B cell (primary cell): ENCODE measurements at regions of chr10 and their contacts with region 1.

Region 1: GRCh38 chr10:63268798-63269503 is 135.8 kb downstream of the NRBF2 start:
- DNase-seq: peak; percentile 93
- ATAC-seq: peak; percentile 89
- H3K4me3 ChIP-seq: peak overlapping the region; percentile 64 to 100 (median 95)
- H3K4me3 Mint-ChIP-seq: peak overlapping the region; percentile 100
- H3K27ac ChIP-seq: peak overlapping the region; percentile 85 to 94
- H3K27ac Mint-ChIP-seq: peak overlapping the region; percentile 99
- H3K4me1 ChIP-seq: peaks cover 14 to 18% of the 10 kb centered on the region in 2 donors
- H3K4me1 Mint-ChIP-seq: peaks cover 31% of the 10 kb centered on the region
- H3K27me3 ChIP-seq: no peaks in the 10 kb centered on the region
- H3K27me3 Mint-ChIP-seq: no peaks in the 10 kb centered on the region
- CTCF ChIP-seq: peak; percentile 43

Region 2: DNA sequence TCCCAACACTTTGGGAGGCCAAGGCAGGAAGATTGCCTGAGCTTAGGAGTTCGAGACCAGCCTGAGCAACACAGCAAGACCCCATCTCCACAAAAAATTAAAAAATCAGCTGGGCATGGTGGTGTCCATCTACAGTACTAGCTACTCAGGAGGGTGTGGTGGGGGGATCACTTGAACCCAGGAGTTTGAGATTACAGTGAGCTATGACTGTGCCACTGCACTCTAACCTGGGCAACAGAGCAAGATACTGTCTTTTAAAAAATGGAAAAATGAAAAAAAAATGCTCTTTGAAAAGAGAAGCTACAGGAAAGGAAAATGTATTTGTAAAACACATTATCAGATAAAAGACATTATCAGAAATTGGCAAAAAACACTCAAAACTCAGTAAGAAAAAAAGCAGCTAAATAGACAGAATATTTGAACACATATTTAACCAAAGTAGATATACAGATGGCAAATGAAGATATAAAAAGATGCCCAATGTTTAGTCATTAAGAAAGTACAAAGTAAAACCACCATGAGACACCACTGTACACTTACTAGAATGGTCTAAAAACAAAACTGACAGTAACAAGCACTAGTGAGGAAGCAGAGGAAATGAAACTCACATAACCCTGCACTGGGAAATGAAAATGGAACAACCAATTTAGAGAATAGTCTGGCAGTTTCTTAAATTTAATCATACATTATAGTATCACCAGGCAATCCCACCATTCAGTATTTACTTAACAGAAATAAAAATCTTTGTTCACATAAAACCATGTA is 95.3 kb before region 1 on chr10:
- CTCF ChIA-PET with region 1: no interaction called
- POLR2A ChIA-PET with region 1: no interaction called
- intact Hi-C with region 1: loop called (anchors 5 kb)
- DNase-seq: peak; percentile 70
- ATAC-seq: peak; percentile 91
- H3K4me3 ChIP-seq: no peak overlapping the region
- H3K4me3 Mint-ChIP-seq: peak overlapping the region; percentile 4
- H3K27ac ChIP-seq: peak overlapping the region; percentile 21 to 51
- H3K27ac Mint-ChIP-seq: peak overlapping the region; percentile 59
- H3K4me1 ChIP-seq: peaks cover 18 to 22% of the 10 kb centered on the region in 2 donors
- H3K4me1 Mint-ChIP-seq: peaks cover 31% of the 10 kb centered on the region
- H3K27me3 ChIP-seq: no peaks in the 10 kb centered on the region
- H3K27me3 Mint-ChIP-seq: no peaks in the 10 kb centered on the region
- CTCF ChIP-seq: no peak

Region 3: GRCh38 chr10:63256009-63256773 is 12.8 kb before region 1 on chr10:
- CTCF ChIA-PET with region 1: interaction called, 4 read pairs
- POLR2A ChIA-PET with region 1: interaction called, 6 read pairs
- intact Hi-C with region 1: loop called (anchors 1 kb)
- DNase-seq: peak; percentile 47
- ATAC-seq: peak; percentile 42
- H3K4me3 ChIP-seq: peak overlapping the region in 1 of 5 experiments; percentile 32
- H3K4me3 Mint-ChIP-seq: peak overlapping the region; percentile 83
- H3K27ac ChIP-seq: peak overlapping the region; percentile 34 to 73
- H3K27ac Mint-ChIP-seq: peak overlapping the region; percentile 88
- H3K4me1 ChIP-seq: peaks cover 81 to 92% of the 10 kb centered on the region in 2 donors
- H3K4me1 Mint-ChIP-seq: peaks cover 85% of the 10 kb centered on the region
- H3K27me3 ChIP-seq: no peaks in the 10 kb centered on the region
- H3K27me3 Mint-ChIP-seq: no peaks in the 10 kb centered on the region
- CTCF ChIP-seq: no peak

Region 4: GRCh38 chr10:63286754-63287264 is 17.9 kb after region 1 on chr10:
- CTCF ChIA-PET with region 1: no interaction called
- POLR2A ChIA-PET with region 1: no interaction called
- intact Hi-C with region 1: no loop called
- DNase-seq: no peak
- ATAC-seq: no peak
- H3K4me3 ChIP-seq: no peak overlapping the region
- H3K4me3 Mint-ChIP-seq: no peak overlapping the region
- H3K27ac ChIP-seq: no peak overlapping the region
- H3K27ac Mint-ChIP-seq: no peak overlapping the region
- H3K4me1 ChIP-seq: peaks cover 5 to 7% of the 10 kb centered on the region in 2 donors
- H3K4me1 Mint-ChIP-seq: peaks cover 19% of the 10 kb centered on the region
- H3K27me3 ChIP-seq: no peaks in the 10 kb centered on the region
- H3K27me3 Mint-ChIP-seq: no peaks in the 10 kb centered on the region
- CTCF ChIP-seq: no peak

Region 5: GRCh38 chr10:63308628-63309027 is 39.7 kb after region 1 on chr10:
- CTCF ChIA-PET with region 1: no interaction called
- POLR2A ChIA-PET with region 1: no interaction called
- intact Hi-C with region 1: no loop called
- DNase-seq: no peak
- ATAC-seq: no peak
- H3K4me3 ChIP-seq: no peak overlapping the region
- H3K4me3 Mint-ChIP-seq: no peak overlapping the region
- H3K27ac ChIP-seq: no peak overlapping the region
- H3K27ac Mint-ChIP-seq: no peak overlapping the region
- H3K4me1 ChIP-seq: no peaks in the 10 kb centered on the region
- H3K4me1 Mint-ChIP-seq: peaks cover 1% of the 10 kb centered on the region
- H3K27me3 ChIP-seq: no peaks in the 10 kb centered on the region
- H3K27me3 Mint-ChIP-seq: no peaks in the 10 kb centered on the region
- CTCF ChIP-seq: no peak

Region 6: GRCh38 chr10:63465293-63466143 is 196.6 kb after region 1 on chr10 and contains the start of gene JMJD1C:
- CTCF ChIA-PET with region 1: interaction called, 3 read pairs
- POLR2A ChIA-PET with region 1: interaction called, 3 read pairs
- intact Hi-C with region 1: loop called (anchors 5 kb)
- DNase-seq: peak; percentile 84
- ATAC-seq: peak; percentile 72
- H3K4me3 ChIP-seq: peak within 1 kb of the TSS; percentile 66 to 97 (median 92)
- H3K4me3 Mint-ChIP-seq: peak within 1 kb of the TSS; percentile 98
- H3K27ac ChIP-seq: peak within 1 kb of the TSS; percentile 60 to 75
- H3K27ac Mint-ChIP-seq: peak within 1 kb of the TSS; percentile 95
- H3K4me1 ChIP-seq: peaks cover 13% of the 10 kb centered on the region in 2 donors
- H3K4me1 Mint-ChIP-seq: peaks cover 18% of the 10 kb centered on the region
- H3K27me3 ChIP-seq: no peaks in the 10 kb centered on the region
- H3K27me3 Mint-ChIP-seq: no peaks in the 10 kb centered on the region
- CTCF ChIP-seq: no peak
- total RNA-seq, gene JMJD1C: 235 and 247 TPM in 2 replicates

Region 7: DNA sequence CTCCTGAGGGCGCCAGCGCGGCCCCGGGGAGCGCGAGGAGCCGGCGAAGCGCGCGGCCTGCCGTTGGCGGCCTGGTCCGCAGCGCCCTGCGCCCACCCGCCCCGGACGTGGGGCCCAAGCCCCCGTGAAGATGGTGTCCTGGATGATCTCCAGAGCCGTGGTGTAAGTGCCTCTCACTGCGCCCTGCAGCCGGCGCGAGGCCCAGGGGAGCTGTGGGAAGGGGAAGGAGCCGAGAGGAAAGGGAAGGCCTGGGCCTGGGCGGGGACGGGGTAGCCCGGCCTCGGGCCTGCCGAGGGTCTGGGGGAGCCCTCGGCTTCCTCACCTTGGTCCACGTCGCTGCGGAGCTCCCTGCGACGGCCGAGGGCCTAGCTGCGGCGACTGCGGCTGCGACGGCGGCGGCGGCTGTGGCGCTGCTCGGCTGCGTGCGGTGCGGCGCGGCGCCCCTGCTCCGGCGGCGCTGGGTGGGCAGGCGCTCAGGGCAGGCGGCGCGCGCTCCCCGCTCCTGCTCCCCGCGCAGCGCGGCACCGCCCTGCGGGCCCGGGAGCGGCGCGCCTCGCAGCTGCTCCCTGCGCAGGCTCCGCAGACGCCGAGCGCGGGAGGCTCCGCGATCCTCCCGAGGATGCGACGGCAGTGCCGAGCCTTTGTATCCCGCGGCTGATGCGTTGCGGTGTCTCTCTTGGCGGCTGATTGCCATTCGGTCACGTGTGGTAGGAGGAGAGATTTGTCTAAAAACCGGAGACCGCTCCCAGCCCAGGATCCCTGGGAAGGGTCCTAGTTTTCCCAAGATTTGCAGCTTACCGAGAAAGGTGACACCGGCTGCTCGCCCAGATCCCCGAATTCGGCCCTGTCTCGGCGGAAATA is 252.7 kb after region 1 on chr10:
- CTCF ChIA-PET with region 1: no interaction called
- POLR2A ChIA-PET with region 1: interaction called, 4 read pairs
- intact Hi-C with region 1: loop called (anchors 2 kb)
- DNase-seq: peak; percentile 91
- ATAC-seq: peak; percentile 62
- H3K4me3 ChIP-seq: peak overlapping the region; percentile 46 to 89 (median 82)
- H3K4me3 Mint-ChIP-seq: peak overlapping the region; percentile 91
- H3K27ac ChIP-seq: peak overlapping the region; percentile 75 to 79
- H3K27ac Mint-ChIP-seq: peak overlapping the region; percentile 89
- H3K4me1 ChIP-seq: peaks cover 6 to 17% of the 10 kb centered on the region in 2 donors
- H3K4me1 Mint-ChIP-seq: peaks cover 39% of the 10 kb centered on the region
- H3K27me3 ChIP-seq: no peaks in the 10 kb centered on the region
- H3K27me3 Mint-ChIP-seq: no peaks in the 10 kb centered on the region
- CTCF ChIP-seq: no peak